Panc1 (cell line): ENCODE measurements at regions of chr21 and their contacts with region 1.

Region 1: GRCh38 chr21:33441489-33442477 is 38.0 kb downstream of the TMEM50B start:
- DNase-seq: no peak
- ATAC-seq: no peak
- H3K4me3 ChIP-seq: no peak overlapping the region
- H3K27ac ChIP-seq: no peak overlapping the region
- H3K4me1 ChIP-seq: no peaks in the 10 kb centered on the region
- H3K27me3 ChIP-seq: no peaks in the 10 kb centered on the region
- CTCF ChIP-seq: no peak

Region 2: GRCh38 chr21:32949701-32950100 is 492.1 kb before region 1 on chr21:
- CTCF ChIA-PET with region 1: interaction called, 11 read pairs
- POLR2A ChIA-PET with region 1: no interaction called
- in situ Hi-C with region 1: no loop called
- intact Hi-C with region 1: no loop called
- DNase-seq: no peak
- ATAC-seq: no peak
- H3K4me3 ChIP-seq: no peak overlapping the region
- H3K27ac ChIP-seq: no peak overlapping the region
- H3K4me1 ChIP-seq: no peaks in the 10 kb centered on the region
- H3K27me3 ChIP-seq: peaks cover 18% of the 10 kb centered on the region
- CTCF ChIP-seq: no peak

Region 3: GRCh38 chr21:33360881-33361602 is 80.7 kb before region 1 on chr21:
- CTCF ChIA-PET with region 1: interaction called, 13 read pairs
- POLR2A ChIA-PET with region 1: no interaction called
- in situ Hi-C with region 1: no loop called
- intact Hi-C with region 1: loop called (anchors 1 kb)
- DNase-seq: peak; percentile 67
- ATAC-seq: peak; percentile 98
- H3K4me3 ChIP-seq: peak overlapping the region; percentile 19 to 46
- H3K27ac ChIP-seq: no peak overlapping the region
- H3K4me1 ChIP-seq: no peaks in the 10 kb centered on the region
- H3K27me3 ChIP-seq: no peaks in the 10 kb centered on the region
- CTCF ChIP-seq: peak; percentile 88